A673 (cell line): ENCODE measurements at regions of chr6 and their contacts with region 1.

Region 1: DNA sequence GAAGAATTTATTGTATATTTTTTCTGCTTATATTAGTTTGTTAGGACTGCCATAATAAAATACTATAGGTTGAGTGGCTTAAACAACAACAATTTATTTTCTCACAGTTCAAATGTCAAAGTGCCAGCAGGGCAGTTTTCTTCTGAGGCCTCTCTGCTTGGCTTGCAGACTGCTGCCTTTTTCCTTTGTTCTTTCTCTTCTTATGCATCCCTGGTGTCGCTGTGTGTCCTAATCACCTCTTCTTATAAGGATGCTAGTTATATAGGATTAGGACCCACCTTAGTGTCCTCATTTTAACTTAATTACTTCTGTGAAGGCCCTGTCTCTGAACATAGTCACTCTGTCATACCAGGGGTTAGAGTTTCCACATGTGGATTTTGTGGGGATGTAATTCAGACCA is 354.4 kb downstream of the NKAIN2 start:
- DNase-seq: no peak
- H3K4me3 ChIP-seq: no peak overlapping the region
- H3K27ac ChIP-seq: no peak overlapping the region
- H3K4me1 ChIP-seq: no peaks in the 10 kb centered on the region
- H3K27me3 ChIP-seq: no peaks in the 10 kb centered on the region
- CTCF ChIP-seq: no peak

Region 2: DNA sequence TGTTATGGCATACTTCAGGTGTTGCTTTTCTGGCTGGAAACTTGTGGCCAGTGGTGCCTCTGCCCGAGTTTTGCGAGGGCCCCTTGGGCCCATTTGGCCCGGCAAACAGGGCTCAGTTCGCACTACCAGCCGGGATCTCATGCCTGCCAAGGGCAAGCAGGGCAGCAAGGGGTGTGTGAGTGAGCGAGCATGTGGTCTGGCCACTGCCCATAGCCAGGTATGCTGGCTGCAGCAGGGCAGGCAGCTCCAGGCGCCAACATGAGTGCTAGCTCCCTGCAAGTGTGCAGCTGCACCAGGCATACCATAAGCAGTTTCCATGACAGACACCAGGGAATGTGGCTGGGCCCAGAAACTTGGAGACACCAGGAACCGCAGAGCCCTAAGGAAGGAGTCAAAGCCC is 35.1 kb after region 1 on chr6:
- CTCF ChIA-PET with region 1: no interaction called
- POLR2A ChIA-PET with region 1: no interaction called
- intact Hi-C with region 1: loop called (anchors 1 kb)
- DNase-seq: no peak
- H3K4me3 ChIP-seq: no peak overlapping the region
- H3K27ac ChIP-seq: no peak overlapping the region
- H3K4me1 ChIP-seq: peaks cover 8% of the 10 kb centered on the region
- H3K27me3 ChIP-seq: no peaks in the 10 kb centered on the region
- CTCF ChIP-seq: no peak

Region 3: DNA sequence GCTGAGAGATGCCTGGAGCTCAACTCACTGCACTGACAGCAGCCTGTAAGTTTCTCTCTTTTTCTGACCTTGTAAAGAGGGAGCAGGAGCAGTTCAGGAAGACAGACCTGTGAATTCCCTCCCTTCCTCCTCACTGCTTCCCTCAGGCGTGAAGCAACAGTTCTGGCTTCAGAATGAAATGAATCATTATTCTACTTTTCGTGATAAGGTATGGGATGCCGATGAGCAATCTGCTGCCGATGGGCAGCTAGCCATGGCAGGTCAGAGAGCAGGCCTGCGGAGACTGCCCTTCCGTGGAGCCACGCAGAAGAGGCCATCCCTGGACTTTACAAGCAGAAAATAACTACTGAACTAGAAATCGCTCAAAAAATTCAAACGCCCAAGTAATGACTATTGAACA is 377.7 kb after region 1 on chr6:
- CTCF ChIA-PET with region 1: no interaction called
- POLR2A ChIA-PET with region 1: no interaction called
- intact Hi-C with region 1: no loop called
- DNase-seq: no peak
- H3K4me3 ChIP-seq: no peak overlapping the region
- H3K27ac ChIP-seq: no peak overlapping the region
- H3K4me1 ChIP-seq: no peaks in the 10 kb centered on the region
- H3K27me3 ChIP-seq: no peaks in the 10 kb centered on the region
- CTCF ChIP-seq: no peak